Astrocyte of the cerebellum (primary cell): ENCODE measurements at regions of chr11 and their contacts with region 1.

Region 1: GRCh38 chr11:20355221-20356219 is 8.0 kb upstream of the HTATIP2 start:
- DNase-seq: peak; percentile 27
- H3K4me3 ChIP-seq: no peak overlapping the region
- CTCF ChIP-seq: peak; percentile 76

Region 2: DNA sequence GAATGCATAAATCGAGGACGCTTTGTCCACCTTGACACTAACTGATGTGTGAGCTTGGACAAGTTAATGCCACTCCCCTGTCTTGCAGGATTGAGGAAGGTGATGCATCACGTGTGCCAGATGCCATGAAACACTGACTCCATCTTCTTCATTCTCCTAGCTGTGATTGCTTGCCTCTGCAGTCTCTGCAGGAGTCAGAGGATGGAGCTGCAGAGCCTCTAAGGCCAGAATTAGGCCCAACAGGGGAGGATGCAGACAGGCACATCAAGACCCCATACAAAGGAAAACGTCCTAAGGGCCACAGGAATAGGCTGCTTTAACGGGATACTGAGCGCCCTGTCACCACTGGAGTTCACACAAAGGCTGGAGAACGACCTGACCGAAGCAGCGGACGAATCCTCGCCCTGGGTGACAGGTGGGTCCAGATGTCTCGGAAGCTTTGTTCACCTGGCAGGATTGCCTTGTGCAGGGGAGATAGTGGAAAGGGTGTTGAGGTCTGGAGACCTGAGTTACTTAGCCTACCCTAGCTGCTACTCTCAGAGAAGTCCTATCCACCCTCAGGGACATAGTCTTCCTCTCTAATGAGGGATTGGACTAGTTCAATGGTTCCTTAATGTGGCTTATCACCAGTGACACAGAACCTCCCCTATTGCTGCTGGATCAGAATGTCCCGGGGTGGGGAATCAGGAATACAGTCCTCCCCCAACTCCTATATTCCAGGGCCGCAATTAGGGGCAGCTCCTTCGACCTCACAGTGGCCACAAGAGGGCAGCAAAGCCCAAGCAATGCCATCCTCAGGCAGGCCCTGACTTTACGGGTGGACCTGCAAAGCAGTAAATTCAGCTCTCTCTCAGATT is 227.6 kb before region 1 on chr11:
- in situ Hi-C with region 1: loop called (anchors 25 kb)
- DNase-seq: peak; percentile 48
- H3K4me3 ChIP-seq: no peak overlapping the region
- CTCF ChIP-seq: peak; percentile 84

Region 3: DNA sequence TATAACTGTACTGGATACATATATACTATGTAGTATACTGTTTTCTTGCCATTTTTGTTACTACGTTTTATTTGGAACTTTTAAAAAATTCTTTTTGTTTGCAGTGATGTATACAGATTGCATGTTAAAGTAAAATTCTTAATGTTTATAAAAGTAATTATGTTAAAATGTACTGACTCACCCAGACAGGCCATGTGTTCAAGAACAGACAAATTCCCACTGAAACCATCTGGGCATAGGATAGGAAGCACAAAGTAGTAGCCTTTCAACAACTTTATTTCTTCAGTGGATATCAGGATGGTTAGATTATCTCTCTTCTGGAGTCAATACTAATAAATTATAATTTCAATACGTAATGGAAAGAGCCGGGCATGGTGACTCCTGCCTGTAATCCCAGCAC is 51.8 kb after region 1 on chr11:
- in situ Hi-C with region 1: no loop called
- DNase-seq: no peak
- H3K4me3 ChIP-seq: no peak overlapping the region
- CTCF ChIP-seq: no peak

Region 4: DNA sequence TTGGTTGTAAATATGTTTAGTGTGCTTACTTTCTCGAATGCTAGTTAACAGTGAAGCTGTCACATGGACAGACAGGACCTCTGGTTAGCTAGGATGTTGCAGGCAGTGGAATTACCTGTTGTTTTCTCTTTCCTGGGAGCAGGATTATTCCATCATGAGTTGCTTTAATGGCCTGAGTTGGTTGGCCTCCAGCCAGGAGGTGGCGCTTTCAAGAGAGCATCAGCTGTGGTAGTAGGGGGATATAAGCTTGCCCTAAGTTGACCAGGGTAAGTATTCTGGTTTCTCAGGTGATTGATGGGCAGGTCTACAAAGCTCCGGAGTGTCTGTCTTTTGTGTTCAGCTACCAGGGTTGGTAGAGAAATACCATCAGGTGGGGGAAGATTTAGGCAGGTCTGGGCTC is 357.4 kb after region 1 on chr11:
- in situ Hi-C with region 1: no loop called
- DNase-seq: no peak
- H3K4me3 ChIP-seq: no peak overlapping the region
- CTCF ChIP-seq: no peak